PC-9 (cell line): ENCODE measurements at regions of chr2 and their contacts with region 1.

Region 1: DNA sequence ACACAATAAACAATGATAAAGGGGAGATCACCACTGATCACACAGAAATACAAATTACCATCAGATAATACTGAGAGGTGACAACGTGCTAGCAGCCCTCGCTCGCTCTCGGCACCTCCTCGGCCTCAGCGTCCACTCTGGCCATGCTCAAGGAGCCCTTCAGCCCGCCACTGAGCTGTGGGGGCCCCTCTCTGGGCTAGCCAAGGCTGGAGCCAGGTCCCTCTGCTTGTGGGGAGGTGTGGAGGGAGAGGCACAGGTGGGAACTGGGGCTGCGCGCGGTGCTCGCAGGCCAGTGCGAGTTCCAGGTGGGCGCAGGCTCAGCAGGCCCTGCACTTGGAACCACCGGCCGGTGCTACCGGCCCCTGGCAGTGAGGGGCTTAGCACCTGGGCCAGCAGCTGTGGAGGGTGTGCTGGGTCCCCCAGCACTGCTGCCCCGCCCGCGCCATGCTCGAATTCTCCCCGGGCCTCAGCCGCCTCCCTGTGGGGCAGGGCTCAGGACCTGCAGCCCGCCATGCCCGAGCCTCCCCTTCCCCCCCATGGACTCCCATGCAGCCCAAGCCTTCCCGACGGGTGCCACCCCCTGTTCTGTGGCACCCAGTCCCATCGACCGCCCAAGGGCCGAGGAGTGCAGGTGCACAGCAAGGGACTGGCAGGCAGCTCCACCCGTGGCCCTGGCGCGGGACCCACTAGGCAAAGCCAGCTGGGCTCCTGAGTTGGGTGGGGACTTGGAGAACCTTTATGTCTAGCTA is 340.0 kb upstream of the GULP1 start:
- DNase-seq: no peak
- H3K4me3 ChIP-seq: no peak overlapping the region
- H3K27ac ChIP-seq: no peak overlapping the region
- H3K4me1 ChIP-seq: no peaks in the 10 kb centered on the region
- H3K27me3 ChIP-seq: no peaks in the 10 kb centered on the region
- CTCF ChIP-seq: no peak

Region 2: DNA sequence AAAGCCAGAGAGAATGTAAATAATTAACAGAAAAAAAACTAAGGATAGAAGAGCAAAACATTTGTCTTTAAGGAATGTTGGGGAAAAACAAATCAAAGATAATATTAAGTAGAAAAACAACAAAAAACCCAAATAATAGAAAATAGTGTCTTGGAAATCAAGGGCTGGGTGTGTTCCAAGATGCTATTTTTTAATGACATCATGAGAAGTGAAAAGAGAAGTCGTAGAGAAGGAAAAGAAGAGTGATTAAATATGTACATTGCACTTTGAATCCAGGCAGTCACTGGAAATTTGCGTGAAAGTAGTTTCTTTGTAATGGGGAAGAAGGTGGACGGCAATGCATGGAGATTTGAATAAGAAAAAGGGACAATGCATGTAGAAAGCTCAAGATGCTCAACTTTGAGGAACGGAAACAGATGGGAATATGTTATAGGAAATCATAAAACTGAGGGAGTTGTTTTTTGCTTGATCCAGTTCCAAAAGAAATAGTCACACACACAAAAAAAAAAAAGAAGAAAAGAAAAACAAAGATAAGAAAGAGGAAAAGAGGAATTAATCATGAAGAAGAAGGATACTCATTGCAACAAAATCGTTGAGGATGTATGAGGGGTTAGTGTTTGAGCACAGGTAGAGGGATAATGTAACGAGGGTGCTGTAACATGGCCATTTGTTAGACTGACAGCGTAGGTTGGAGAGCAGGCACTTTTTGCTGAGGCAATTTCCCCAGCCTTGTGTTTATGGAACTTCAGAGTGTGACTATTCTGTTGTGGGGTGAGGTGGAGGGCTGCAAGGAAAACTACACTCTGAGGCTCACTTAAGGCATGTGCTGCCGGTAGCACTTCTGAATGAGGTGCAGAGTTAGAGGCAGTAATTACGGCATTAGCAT is 687.7 kb before region 1 on chr2:
- CTCF ChIA-PET with region 1: no interaction called
- POLR2A ChIA-PET with region 1: no interaction called
- intact Hi-C with region 1: no loop called
- DNase-seq: no peak
- H3K4me3 ChIP-seq: no peak overlapping the region
- H3K27ac ChIP-seq: no peak overlapping the region
- H3K4me1 ChIP-seq: no peaks in the 10 kb centered on the region
- H3K27me3 ChIP-seq: no peaks in the 10 kb centered on the region
- CTCF ChIP-seq: no peak

Region 3: DNA sequence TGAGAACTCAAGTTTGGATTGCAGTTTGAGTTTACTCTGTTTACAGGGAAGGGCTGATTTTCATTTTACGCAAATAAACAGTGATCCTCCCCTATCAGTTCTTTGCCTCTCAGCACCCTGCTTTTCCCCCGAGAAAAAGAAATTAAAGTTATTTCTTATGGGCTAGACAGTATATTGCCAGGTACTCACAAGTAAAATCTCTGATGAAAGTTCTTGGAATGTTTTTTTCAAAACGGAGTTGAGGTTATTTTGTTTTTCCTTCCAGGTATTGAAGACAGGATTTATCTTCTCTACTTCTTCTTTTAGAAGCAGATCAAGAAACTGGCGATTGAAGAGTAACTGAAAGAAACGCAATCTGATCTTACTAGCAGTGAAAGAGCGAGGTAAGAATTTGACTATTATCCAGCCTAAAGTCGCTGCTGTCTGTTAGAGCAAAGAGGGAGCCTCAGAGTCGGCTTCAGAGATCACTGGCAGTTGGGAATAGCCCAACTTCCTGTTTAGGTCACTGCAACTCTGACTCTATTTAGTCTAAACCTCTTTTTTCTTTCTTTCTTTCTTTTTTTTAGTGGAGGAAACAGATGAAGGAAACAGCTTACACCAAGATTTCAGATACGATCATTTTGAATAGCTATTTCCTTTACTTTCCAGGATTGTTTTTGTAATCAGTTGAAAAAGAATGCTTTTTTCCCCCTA is 397.5 kb before region 1 on chr2 and contains the start of gene TFPI:
- CTCF ChIA-PET with region 1: no interaction called
- POLR2A ChIA-PET with region 1: no interaction called
- intact Hi-C with region 1: no loop called
- DNase-seq: no peak
- H3K4me3 ChIP-seq: no peak within 1 kb of the TSS
- H3K27ac ChIP-seq: peak within 1 kb of the TSS; percentile 46
- H3K4me1 ChIP-seq: peaks cover 9% of the 10 kb centered on the region
- H3K27me3 ChIP-seq: no peaks in the 10 kb centered on the region
- CTCF ChIP-seq: no peak
- total RNA-seq, gene TFPI: 35.5 and 65.7 TPM in 2 replicates

Region 4: GRCh38 chr2:188884046-188884445 is 932.4 kb after region 1 on chr2:
- CTCF ChIA-PET with region 1: no interaction called
- POLR2A ChIA-PET with region 1: interaction called, 13 read pairs
- intact Hi-C with region 1: no loop called
- DNase-seq: no peak
- H3K4me3 ChIP-seq: no peak overlapping the region
- H3K27ac ChIP-seq: no peak overlapping the region
- H3K4me1 ChIP-seq: no peaks in the 10 kb centered on the region
- H3K27me3 ChIP-seq: no peaks in the 10 kb centered on the region
- CTCF ChIP-seq: no peak